ENCODE measurements at regions of chr17 and their contacts with region 1.

Region 1: DNA sequence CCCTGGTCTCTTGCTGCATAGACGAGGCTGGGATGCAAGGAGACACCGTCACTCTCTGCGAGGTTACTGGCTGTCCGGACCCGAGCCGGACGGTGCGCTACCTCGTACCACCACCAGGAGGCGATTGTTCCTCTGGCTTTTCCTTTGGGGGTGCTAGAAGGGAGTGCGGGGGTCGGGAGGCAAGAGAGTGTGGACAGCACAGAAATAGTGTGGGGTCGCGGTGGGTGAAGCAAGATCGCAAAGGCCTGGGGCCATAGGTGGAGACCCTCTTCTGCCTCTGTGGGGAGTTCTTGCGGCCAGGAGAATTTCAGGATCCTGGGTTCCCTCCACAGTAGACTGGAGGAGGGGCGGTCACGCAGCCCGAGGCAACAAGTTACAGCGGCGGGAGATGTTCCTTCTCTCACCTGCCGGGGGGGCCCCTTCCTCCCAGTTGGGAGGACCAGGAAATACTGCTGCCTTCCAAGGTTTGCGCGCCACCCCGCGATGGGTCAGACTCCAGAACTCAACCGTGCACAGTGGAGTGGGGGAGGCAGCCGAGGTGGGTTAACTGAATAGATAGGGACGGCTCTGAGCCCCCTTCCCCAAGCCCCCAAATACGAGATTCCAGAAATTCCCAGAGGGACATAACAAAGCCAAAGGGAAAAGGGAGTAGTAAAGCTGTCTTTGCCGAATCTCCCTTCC is 6.9 kb downstream of the PHOSPHO1 start:
- DNase-seq: no peak
- H3K4me3 ChIP-seq: no peak overlapping the region
- CTCF ChIP-seq: peak; percentile 90

Region 2: DNA sequence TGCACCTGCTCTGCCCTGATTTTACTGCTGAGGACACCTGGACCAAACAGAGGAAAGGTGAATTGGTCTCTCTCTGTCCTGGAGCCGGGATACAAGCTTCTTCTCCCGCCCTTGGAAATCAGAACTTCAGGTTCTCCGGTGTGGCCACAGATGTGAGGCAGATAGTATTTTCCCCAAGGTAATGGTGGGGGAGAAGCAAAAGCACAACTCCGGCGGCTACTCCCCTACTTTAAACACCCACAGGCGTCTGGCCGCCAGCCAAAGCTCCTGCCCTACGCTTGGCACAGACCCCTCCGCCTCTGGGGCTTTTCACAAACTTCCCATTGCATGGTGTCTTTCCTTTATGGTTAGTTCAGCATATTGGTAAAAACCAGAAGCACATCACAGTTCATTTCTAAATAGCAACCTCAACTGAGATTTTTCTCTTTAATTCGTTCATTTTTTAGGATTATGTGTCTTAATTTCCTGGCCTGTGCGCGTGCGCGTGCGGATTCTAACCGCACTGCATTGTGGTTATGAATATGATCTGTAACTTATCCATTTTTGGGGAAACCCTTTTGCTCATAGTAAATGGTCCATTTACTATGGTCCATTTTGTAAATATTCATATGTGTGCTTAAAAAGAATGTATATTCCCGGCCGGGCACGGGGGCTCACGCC is 130.4 kb before region 1 on chr17:
- CTCF ChIA-PET with region 1: no interaction called
- POLR2A ChIA-PET with region 1: no interaction called
- DNase-seq: no peak
- H3K4me3 ChIP-seq: no peak overlapping the region
- CTCF ChIP-seq: no peak

Region 3: GRCh38 chr17:49201481-49201927 is 22.2 kb before region 1 on chr17:
- CTCF ChIA-PET with region 1: interaction called, 165 read pairs
- POLR2A ChIA-PET with region 1: no interaction called
- DNase-seq: peak; percentile 46
- H3K4me3 ChIP-seq: no peak overlapping the region
- CTCF ChIP-seq: no peak

Region 4: DNA sequence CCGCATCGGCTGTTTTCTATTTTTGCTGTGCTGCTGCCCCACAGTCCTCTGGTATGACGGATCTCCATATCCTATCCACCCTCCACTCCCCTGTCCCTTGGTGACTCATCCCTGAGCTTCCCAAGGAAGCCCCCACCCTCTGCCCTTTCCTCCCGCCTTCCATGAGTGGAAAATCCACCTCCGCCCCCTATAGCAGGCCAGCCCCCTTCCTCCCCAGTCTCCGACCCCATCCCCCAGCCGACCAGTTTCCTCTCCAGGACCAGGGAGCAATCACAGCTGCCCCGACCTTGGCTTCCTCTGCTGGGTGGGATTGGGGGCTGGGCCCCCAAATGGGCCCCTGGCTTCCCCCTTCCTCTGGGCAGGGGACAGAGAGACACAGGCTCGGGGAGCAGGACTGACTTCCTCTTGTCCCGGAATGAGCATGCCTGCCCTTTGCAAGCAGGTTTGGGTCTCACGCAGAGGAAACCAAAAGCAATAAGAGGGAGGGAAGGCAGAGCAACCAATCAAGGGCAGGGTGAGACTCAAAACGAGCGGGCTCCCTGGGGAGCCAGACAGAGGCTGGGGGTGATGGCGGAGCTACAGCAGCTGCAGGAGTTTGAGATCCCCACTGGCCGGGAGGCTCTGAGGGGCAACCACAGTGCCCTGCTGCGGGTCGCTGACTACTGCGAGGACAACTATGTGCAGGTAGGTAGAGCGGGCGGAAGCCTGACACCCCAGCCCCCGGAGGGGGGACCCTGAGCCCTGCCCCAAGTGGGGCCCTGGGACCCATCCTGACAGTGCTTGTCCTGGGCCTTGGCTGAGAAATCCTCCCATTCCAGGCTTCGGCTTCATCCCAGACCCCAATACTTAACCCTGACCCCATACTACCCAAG is 13.3 kb before region 1 on chr17 and contains the starts of genes ABI3 and GNGT2:
- CTCF ChIA-PET with region 1: interaction called, 165 read pairs
- POLR2A ChIA-PET with region 1: no interaction called
- DNase-seq: no peak
- H3K4me3 ChIP-seq: peak within 1 kb of the TSS; percentile 29
- CTCF ChIP-seq: no peak

Measured in AG04449 (cell line).